Panc1 (cell line): ENCODE measurements at regions of chr7 and their contacts with region 1.

Region 1: GRCh38 chr7:76262683-76263402 is 39.6 kb upstream of the HSPB1 start:
- DNase-seq: peak; percentile 52
- ATAC-seq: peak; percentile 84
- H3K4me3 ChIP-seq: no peak overlapping the region
- H3K27ac ChIP-seq: no peak overlapping the region
- H3K4me1 ChIP-seq: peaks cover 2% of the 10 kb centered on the region; the same call in 1 of the 2 replicates
- H3K27me3 ChIP-seq: no peaks in the 10 kb centered on the region
- CTCF ChIP-seq: peak; percentile 94

Region 2: GRCh38 chr7:76179686-76180085 is 83.2 kb before region 1 on chr7:
- CTCF ChIA-PET with region 1: interaction called, 18 read pairs
- POLR2A ChIA-PET with region 1: no interaction called
- in situ Hi-C with region 1: no loop called
- intact Hi-C with region 1: loop called (anchors 2 kb)
- DNase-seq: no peak
- ATAC-seq: no peak
- H3K4me3 ChIP-seq: no peak overlapping the region
- H3K27ac ChIP-seq: no peak overlapping the region
- H3K4me1 ChIP-seq: no peaks in the 10 kb centered on the region
- H3K27me3 ChIP-seq: no peaks in the 10 kb centered on the region
- CTCF ChIP-seq: no peak

Region 3: GRCh38 chr7:76185187-76185896 is 77.5 kb before region 1 on chr7:
- CTCF ChIA-PET with region 1: interaction called, 14 read pairs
- POLR2A ChIA-PET with region 1: interaction called, 4 read pairs
- in situ Hi-C with region 1: no loop called
- intact Hi-C with region 1: no loop called
- DNase-seq: no peak
- ATAC-seq: no peak
- H3K4me3 ChIP-seq: no peak overlapping the region
- H3K27ac ChIP-seq: no peak overlapping the region
- H3K4me1 ChIP-seq: no peaks in the 10 kb centered on the region
- H3K27me3 ChIP-seq: no peaks in the 10 kb centered on the region
- CTCF ChIP-seq: no peak

Region 4: DNA sequence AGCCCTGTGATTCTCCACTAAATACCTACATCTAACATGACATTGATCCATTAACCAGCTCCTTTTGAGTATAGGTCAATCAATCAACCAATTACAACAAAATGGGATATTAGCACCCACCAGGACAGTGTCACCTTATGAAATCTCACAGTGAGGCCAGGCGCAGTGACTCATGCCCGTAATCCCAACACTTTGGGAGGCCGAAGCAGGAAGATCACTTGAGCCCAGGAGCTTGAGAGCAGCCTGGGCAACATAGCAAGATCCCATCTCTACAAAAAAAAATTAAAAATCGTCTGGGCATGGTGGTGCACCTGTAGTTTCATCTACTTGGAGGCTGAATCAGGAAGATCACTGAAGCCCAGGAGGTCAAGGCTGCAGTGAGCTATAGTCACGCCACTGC is 32.6 kb before region 1 on chr7:
- CTCF ChIA-PET with region 1: interaction called, 10 read pairs
- POLR2A ChIA-PET with region 1: interaction called, 8 read pairs
- in situ Hi-C with region 1: no loop called
- intact Hi-C with region 1: no loop called
- DNase-seq: no peak
- ATAC-seq: no peak
- H3K4me3 ChIP-seq: no peak overlapping the region
- H3K27ac ChIP-seq: no peak overlapping the region
- H3K4me1 ChIP-seq: no peaks in the 10 kb centered on the region
- H3K27me3 ChIP-seq: peaks cover 4% of the 10 kb centered on the region; the same call in 1 of the 2 replicates
- CTCF ChIP-seq: no peak

Region 5: DNA sequence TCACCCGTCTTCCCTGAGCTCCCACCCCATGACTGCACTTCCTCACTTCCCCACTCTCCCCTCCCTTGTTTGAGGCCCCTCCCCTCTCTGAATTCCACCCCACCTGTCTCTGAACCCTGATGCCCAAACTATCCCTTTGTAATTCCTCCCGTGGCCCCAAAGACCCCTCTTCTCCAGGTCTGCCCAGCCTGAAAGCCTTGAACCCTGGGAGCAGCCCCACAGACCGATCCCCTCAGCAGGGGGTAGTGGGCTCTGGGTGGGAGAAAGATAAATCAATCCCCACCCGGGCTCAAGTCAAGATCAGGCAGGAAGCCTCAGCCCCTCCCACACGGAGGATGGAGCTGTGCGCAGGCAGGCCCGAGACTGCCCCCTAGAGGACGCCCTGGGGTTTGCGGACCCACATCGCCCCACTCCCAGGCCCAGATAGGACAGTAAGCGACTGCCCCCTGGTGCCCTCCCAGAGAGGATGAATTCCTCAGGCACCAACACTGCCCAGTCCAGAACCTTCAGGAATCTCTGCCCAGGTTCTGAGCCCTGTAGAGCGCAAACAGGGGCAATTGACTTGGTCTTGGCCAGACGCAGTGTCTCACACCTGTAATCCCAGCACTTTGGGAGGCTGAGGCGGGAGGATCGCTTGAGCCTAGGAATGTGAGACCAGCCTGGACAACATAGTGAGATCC is 51.3 kb after region 1 on chr7:
- CTCF ChIA-PET with region 1: interaction called, 7 read pairs
- POLR2A ChIA-PET with region 1: interaction called, 14 read pairs
- in situ Hi-C with region 1: no loop called
- intact Hi-C with region 1: no loop called
- DNase-seq: no peak
- ATAC-seq: peak; percentile 77
- H3K4me3 ChIP-seq: peak overlapping the region in 1 of 2 experiments; percentile 33; a peak in 1 of 4 replicates
- H3K27ac ChIP-seq: peak overlapping the region; percentile 72
- H3K4me1 ChIP-seq: peaks cover 17% of the 10 kb centered on the region
- H3K27me3 ChIP-seq: no peaks in the 10 kb centered on the region
- CTCF ChIP-seq: peak; percentile 100

Region 6: DNA sequence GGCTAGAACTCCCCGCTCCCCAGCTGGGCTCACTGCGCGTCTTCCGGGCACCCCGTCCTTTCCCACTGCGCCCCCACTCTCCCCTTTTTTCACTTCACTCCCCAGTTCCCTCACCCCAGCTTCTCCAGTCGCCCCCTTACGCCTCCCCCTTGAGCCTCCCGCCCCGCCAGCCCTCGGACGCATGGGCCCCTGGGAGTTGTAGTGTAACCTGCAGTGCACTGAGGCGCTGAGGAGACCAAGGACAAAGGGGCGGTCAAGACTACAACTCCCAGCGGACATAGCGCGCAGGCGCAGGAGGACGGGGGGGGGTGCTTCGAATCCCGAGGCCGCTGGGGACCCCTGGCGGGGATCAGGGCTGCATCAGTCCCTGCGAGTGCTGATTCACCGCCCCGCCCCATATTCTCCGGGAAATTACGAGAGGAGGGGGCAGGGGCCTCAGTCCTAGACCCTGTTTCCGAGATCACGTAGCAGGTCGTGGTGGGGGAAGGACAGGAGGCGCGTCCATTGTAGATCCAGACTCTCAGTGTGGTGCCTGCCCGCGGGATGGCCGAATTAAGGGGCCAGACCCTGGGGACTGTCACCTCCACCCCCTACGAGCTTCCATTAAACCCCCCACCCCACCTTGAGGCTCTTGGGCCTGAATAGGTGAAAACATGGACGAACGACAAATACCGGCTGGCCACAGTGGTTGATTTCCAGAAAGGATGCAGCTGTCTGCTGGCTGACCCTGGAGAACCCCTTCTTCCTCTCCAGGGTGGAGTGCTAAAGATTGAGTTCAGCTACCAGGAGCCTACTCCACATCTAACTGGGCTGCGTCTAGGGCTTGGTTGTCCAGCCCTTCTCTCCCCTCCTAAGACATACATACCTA is 96.5 kb after region 1 on chr7:
- CTCF ChIA-PET with region 1: no interaction called
- POLR2A ChIA-PET with region 1: interaction called, 13 read pairs
- in situ Hi-C with region 1: no loop called
- intact Hi-C with region 1: no loop called
- DNase-seq: peak; percentile 97
- ATAC-seq: peak; percentile 98
- H3K4me3 ChIP-seq: peak overlapping the region; percentile 87 to 99
- H3K27ac ChIP-seq: peak overlapping the region; percentile 85
- H3K4me1 ChIP-seq: peaks cover 30% of the 10 kb centered on the region
- H3K27me3 ChIP-seq: no peaks in the 10 kb centered on the region
- CTCF ChIP-seq: peak; percentile 93

Region 7: DNA sequence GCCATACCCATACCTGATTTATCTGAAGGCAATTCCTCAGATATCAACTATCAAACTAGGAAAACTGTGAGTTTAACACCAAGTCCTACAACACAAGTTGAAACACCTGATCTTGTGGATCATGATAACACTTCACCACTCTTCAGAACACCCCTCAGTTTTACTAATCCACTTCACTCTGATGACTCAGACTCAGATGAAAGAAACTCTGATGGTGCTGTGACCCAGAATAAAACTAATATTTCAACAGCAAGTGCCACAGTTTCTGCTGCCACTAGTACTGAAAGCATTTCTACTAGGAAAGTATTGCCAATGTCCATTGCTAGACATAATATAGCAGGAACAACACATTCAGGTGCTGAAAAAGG is 1364.5 kb after region 1 on chr7:
- CTCF ChIA-PET with region 1: interaction called, 18 read pairs
- POLR2A ChIA-PET with region 1: no interaction called
- in situ Hi-C with region 1: no loop called
- intact Hi-C with region 1: no loop called
- DNase-seq: no peak
- ATAC-seq: no peak
- H3K4me3 ChIP-seq: no peak overlapping the region
- H3K27ac ChIP-seq: no peak overlapping the region
- H3K4me1 ChIP-seq: no peaks in the 10 kb centered on the region
- H3K27me3 ChIP-seq: no peaks in the 10 kb centered on the region
- CTCF ChIP-seq: no peak